Breast epithelium (tissue), 4 donors: ENCODE measurements at regions of chr6 and their contacts with region 1.

Region 1: DNA sequence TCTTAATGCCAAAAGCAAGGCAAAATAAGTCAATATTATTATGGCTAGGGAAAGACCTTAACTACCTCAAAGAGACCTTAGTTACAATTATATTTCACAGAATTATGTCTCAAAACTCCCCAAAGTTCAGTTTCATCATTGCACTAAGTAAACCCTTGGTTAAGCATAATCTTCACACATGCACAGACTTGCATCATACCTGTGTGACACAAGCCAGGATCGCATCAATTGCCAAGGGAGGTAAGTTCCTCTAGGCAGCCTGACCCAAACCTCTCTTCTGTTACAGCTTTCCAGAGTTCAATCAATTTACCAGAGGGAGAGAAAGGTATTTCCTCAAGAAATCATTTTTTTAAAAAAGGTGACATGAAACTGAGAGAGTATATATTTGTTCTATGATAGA is 31.9 kb upstream of the PRSS35 start:
- DNase-seq: no peak
- H3K4me3 ChIP-seq: no peak overlapping the region
- H3K27ac ChIP-seq: no peak overlapping the region
- H3K4me1 ChIP-seq: no peaks in the 10 kb centered on the region
- H3K27me3 ChIP-seq: no peaks in the 10 kb centered on the region
- CTCF ChIP-seq: no peak
- POLR2A ChIP-seq: no peak

Region 2: DNA sequence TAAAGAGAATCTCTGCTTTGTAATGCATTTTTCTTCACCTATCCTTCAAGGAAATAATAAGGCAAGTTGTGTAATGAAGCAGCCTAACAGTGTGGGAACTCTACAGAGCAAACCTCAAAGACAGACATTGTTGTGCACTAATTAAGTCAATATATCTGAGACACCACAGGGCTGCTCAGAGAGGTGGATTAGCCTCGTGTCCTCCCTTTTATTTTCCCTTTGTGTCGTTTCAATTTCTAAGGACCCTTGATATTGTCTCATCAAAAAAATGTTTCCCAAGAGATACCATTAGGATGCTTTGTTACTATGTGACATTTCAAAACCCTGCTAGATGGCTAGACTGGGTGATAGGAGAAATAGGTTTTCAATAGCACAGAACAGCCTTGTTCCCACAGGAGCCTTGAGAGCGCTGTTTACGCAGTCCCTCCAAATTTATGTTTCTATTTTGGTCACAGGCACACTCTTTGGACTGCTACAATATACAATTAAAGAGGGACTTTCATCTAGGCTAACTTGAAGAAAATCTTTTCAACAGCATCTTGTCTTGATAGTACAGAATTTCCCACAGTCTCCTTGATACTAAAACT is 437.9 kb before region 1 on chr6:
- intact Hi-C with region 1: no loop called
- DNase-seq: no peak
- H3K4me3 ChIP-seq: no peak overlapping the region
- H3K27ac ChIP-seq: no peak overlapping the region
- H3K4me1 ChIP-seq: no peaks in the 10 kb centered on the region
- H3K27me3 ChIP-seq: no peaks in the 10 kb centered on the region
- CTCF ChIP-seq: no peak
- POLR2A ChIP-seq: no peak

Region 3: GRCh38 chr6:83459663-83460062 is 20.8 kb before region 1 on chr6:
- intact Hi-C with region 1: loop called (anchors 2 kb)
- DNase-seq: no peak
- H3K4me3 ChIP-seq: no peak overlapping the region
- H3K27ac ChIP-seq: no peak overlapping the region
- H3K4me1 ChIP-seq: no peaks in the 10 kb centered on the region
- H3K27me3 ChIP-seq: no peaks in the 10 kb centered on the region
- CTCF ChIP-seq: no peak
- POLR2A ChIP-seq: no peak

Region 4: DNA sequence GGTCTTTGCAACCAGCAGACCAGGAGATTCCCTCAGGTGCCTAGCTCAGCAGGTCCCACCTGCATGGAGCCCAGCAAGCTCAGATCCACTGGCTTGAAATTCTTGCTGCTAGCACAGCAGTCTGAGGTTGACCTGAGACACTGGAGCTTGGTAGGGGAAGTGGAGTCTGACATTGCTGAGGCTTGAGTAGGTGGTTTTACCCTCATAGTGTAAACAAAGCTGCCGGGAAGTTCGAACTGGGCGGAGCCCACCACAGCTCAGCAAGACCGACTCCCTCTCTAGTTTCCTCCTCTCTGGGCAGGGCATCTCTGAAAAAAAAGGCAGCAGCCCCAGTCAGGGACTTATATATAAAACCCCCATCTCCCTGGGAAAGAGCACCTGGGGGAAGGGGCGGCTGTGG is 66.2 kb after region 1 on chr6:
- intact Hi-C with region 1: no loop called
- DNase-seq: no peak
- H3K4me3 ChIP-seq: no peak overlapping the region
- H3K27ac ChIP-seq: no peak overlapping the region
- H3K4me1 ChIP-seq: no peaks in the 10 kb centered on the region
- H3K27me3 ChIP-seq: no peaks in the 10 kb centered on the region
- CTCF ChIP-seq: no peak
- POLR2A ChIP-seq: no peak